Mammary epithelial cell (primary cell): ENCODE measurements at regions of chr6 and their contacts with region 1.

Region 1: DNA sequence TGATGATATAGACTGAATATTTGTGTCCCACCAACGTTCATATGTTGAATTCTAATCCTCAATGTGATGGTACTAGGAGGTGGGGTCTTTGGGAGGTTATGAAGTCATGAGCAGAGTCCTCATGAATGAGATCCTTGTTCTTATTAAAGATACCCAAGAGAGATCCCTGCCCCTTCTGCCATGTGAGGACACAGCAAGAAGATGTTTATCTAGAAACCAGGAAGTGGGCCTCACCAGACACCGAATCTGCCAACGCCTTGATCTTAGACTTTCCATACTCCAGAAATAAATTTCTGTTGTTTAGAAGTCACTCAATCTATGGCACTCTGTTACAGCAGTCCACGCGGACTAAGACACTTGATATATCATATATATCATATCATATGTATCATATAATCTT is 67.7 kb upstream of the GCM1 start:
- DNase-seq: no peak
- H3K4me3 ChIP-seq: no peak overlapping the region
- H3K27ac ChIP-seq: no peak overlapping the region
- H3K4me1 ChIP-seq: no peaks in the 10 kb centered on the region
- H3K27me3 ChIP-seq: peaks cover 2% of the 10 kb centered on the region
- CTCF ChIP-seq: no peak

Region 2: DNA sequence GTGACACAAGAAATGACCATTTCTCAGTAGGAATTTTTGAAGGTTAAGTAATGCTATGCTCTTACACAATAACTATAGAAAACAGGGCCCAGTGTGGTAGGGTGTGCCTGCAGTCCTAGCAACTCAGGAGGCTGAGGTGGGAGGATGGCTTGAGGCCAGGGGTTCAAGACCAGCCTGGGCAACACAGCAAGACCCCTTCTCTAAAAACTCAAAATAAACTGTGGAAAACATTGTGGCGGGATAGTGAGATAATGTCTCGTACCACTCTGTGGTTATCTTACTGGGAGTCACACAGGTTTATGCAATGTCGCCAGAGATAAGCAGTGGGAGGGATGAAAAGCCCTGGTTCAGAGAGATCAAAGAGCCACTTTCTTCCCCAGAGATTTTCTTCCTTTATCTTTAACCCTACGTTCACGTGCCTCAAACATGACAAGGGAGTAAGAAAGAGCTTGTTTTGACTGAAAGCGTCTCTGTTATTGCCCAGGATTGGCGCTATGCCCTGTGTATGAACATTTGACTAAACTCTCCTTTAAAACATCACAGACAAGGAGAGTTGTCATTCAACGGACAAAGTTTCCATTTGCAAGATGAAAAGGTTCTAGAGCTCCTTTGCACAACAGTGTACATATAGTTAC is 81.6 kb before region 1 on chr6:
- CTCF ChIA-PET with region 1: no interaction called
- dilution Hi-C with region 1: loop called (anchors 5 kb)
- in situ Hi-C with region 1: no loop called
- intact Hi-C with region 1: no loop called
- DNase-seq: no peak
- H3K4me3 ChIP-seq: no peak overlapping the region
- H3K27ac ChIP-seq: no peak overlapping the region
- H3K4me1 ChIP-seq: no peaks in the 10 kb centered on the region
- H3K27me3 ChIP-seq: no peaks in the 10 kb centered on the region
- CTCF ChIP-seq: no peak

Region 3: DNA sequence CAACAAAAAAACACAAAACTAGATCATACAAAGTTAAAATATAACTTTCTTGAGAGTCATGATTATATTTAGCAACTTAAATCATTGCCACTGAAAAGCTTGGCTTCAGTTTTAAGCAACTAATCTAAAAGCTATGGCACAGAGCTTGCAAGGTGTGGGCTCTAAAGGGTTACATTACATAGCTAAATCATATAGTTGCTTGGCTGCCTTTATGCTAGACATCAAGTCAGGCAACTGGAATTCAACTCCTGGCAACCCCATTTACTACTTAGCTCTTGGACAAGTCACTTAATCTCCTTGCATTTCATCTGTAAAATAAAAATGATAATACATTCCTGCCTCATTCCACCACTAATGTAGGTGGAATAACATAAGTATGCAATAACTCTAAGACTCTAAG is 26.7 kb before region 1 on chr6:
- CTCF ChIA-PET with region 1: no interaction called
- dilution Hi-C with region 1: no loop called
- in situ Hi-C with region 1: no loop called
- intact Hi-C with region 1: no loop called
- DNase-seq: no peak
- H3K4me3 ChIP-seq: no peak overlapping the region
- H3K27ac ChIP-seq: no peak overlapping the region
- H3K4me1 ChIP-seq: no peaks in the 10 kb centered on the region
- H3K27me3 ChIP-seq: no peaks in the 10 kb centered on the region
- CTCF ChIP-seq: no peak

Region 4: DNA sequence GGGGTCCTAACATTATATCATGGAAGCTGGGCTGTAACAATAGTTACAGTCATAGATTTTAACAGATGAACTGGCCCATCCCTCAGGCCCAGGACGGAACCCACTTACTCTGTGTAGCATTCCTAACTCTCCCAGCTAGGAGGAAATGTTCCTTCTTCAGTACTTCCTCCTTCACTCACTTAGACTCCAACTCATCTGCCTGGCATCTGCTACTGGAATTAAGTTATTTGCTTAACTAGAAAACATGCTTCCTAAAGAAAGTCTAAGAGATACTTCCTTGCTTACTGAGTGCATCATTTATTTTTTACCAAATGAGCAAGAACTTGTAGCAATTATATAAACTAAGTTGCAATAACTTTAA is 308.1 kb after region 1 on chr6:
- CTCF ChIA-PET with region 1: no interaction called
- dilution Hi-C with region 1: no loop called
- in situ Hi-C with region 1: no loop called
- intact Hi-C with region 1: no loop called
- DNase-seq: no peak
- H3K4me3 ChIP-seq: no peak overlapping the region
- H3K27ac ChIP-seq: no peak overlapping the region
- H3K4me1 ChIP-seq: peaks cover 22% of the 10 kb centered on the region
- H3K27me3 ChIP-seq: no peaks in the 10 kb centered on the region
- CTCF ChIP-seq: no peak